Astrocyte of the cerebellum (primary cell): ENCODE measurements at regions of chr2 and their contacts with region 1.

Region 1: GRCh38 chr2:174039551-174040416 is 74.6 kb upstream of the SP3 start:
- DNase-seq: peak; percentile 94
- H3K4me3 ChIP-seq: no peak overlapping the region
- CTCF ChIP-seq: peak; percentile 89

Region 2: GRCh38 chr2:173571021-173571882 is 468.5 kb before region 1 on chr2:
- in situ Hi-C with region 1: loop called (anchors 25 kb)
- DNase-seq: peak; percentile 24
- H3K4me3 ChIP-seq: no peak overlapping the region
- CTCF ChIP-seq: peak; percentile 46